H1 (cell line): ENCODE measurements at regions of chr10 and their contacts with region 1.

Region 1: GRCh38 chr10:124418726-124419501 is at the start of gene OAT:
- DNase-seq: peak; percentile 95 to 97
- H3K4me3 ChIP-seq: peak within 1 kb of the TSS; percentile 58 to 79 (median 62)
- H3K27ac ChIP-seq: no peak within 1 kb of the TSS; the same call in 1 of the 2 replicates
- H3K4me1 ChIP-seq: peaks cover 2 to 5% (median 4%) of the 10 kb centered on the region in 4 experiments; a peak in 5 of 7 replicates
- H3K27me3 ChIP-seq: peaks cover 0 to 2% (median 0%) of the 10 kb centered on the region in 4 experiments; a peak in 1 of 7 replicates
- CTCF ChIP-seq: peak; percentile 33 to 47 (median 46); a peak in 3 of 4 replicates
- EP300 ChIP-seq: no peak
- POLR2A ChIP-seq: peak; percentile 95
- RAD21 ChIP-seq: peak; percentile 37 to 43; a peak in 3 of 4 replicates
- total RNA-seq, gene OAT: 121 TPM in 2 replicates

Region 2: DNA sequence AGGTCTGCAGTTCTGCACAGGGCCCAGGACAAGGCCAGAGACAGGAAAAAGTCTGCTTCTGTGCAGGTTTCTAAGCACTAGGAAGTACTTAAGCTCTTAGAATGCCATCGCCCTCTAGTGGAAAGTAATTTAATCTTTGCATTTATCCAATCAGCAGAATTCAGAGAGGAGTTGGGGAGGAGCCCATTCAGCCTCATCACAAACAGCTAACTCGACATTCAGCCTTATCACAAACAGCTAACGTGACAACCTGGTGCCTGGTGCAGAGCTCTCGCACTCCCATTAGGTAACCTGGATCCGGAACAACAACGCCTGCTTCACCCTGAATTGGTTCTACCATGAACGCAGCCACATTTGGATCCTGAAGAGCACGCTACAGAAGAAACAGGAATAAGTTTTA is 15.4 kb before region 1 on chr10:
- CTCF ChIA-PET with region 1: interaction called, 20 read pairs
- POLR2A ChIA-PET with region 1: interaction called, 22 read pairs
- DNase-seq: peak; percentile 51 to 57
- H3K4me3 ChIP-seq: no peak overlapping the region
- H3K27ac ChIP-seq: no peak overlapping the region
- H3K4me1 ChIP-seq: no peaks in the 10 kb centered on the region
- H3K27me3 ChIP-seq: no peaks in the 10 kb centered on the region
- CTCF ChIP-seq: peak in 2 of 3 experiments; percentile 73 to 83; a peak in 3 of 4 replicates
- EP300 ChIP-seq: no peak
- POLR2A ChIP-seq: no peak
- RAD21 ChIP-seq: peak; percentile 61 to 79

Region 3: DNA sequence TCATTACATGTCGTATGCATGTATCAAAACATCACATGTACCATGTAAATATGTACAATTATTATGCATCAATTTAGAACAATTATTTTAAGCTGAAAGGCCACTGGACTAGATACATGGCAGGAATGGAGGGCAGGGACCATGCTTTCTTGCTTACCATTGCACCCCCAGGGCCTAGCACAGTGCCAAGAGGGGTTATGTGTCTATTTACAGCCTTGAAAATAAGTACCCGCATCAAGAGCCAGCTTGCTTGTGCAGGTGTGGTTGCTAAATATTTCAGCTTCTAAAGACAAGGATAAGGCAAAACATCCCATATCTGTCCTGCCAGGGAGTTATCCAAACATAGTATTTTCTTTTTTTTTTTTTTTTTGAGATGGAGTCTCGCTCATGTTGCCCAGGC is 14.5 kb after region 1 on chr10:
- CTCF ChIA-PET with region 1: interaction called, 6 read pairs
- POLR2A ChIA-PET with region 1: interaction called, 19 read pairs
- DNase-seq: no peak
- H3K4me3 ChIP-seq: no peak overlapping the region
- H3K27ac ChIP-seq: no peak overlapping the region
- H3K4me1 ChIP-seq: no peaks in the 10 kb centered on the region; a peak in 1 of 7 replicates
- H3K27me3 ChIP-seq: no peaks in the 10 kb centered on the region
- CTCF ChIP-seq: no peak
- EP300 ChIP-seq: no peak
- POLR2A ChIP-seq: no peak
- RAD21 ChIP-seq: no peak

Region 4: GRCh38 chr10:124450012-124450781 is 31.3 kb after region 1 on chr10 and contains the start of gene NKX1-2:
- CTCF ChIA-PET with region 1: interaction called, 3 read pairs
- POLR2A ChIA-PET with region 1: interaction called, 43 read pairs
- DNase-seq: peak in 1 of 2 experiments; percentile 89
- H3K4me3 ChIP-seq: peak within 1 kb of the TSS; percentile 45 to 72 (median 66)
- H3K27ac ChIP-seq: no peak within 1 kb of the TSS
- H3K4me1 ChIP-seq: peaks cover 17 to 39% (median 27%) of the 10 kb centered on the region in 4 experiments
- H3K27me3 ChIP-seq: peaks cover 1 to 50% (median 38%) of the 10 kb centered on the region in 4 experiments
- CTCF ChIP-seq: no peak
- EP300 ChIP-seq: no peak
- POLR2A ChIP-seq: no peak
- RAD21 ChIP-seq: no peak
- total RNA-seq, gene NKX1-2: 33.9 and 34.9 TPM in 2 replicates

Region 5: GRCh38 chr10:124461438-124462347 is 42.8 kb after region 1 on chr10 and contains the start of gene LHPP:
- CTCF ChIA-PET with region 1: interaction called, 3 read pairs
- POLR2A ChIA-PET with region 1: interaction called, 20 read pairs
- DNase-seq: peak in 1 of 2 experiments; percentile 92
- H3K4me3 ChIP-seq: peak within 1 kb of the TSS; percentile 69 to 91 (median 72)
- H3K27ac ChIP-seq: no peak within 1 kb of the TSS; the same call in 1 of the 2 replicates
- H3K4me1 ChIP-seq: peaks cover 11 to 36% (median 23%) of the 10 kb centered on the region in 4 experiments
- H3K27me3 ChIP-seq: no peaks in the 10 kb centered on the region
- CTCF ChIP-seq: peak in 2 of 3 experiments; percentile 5 to 15; a peak in 2 of 4 replicates
- EP300 ChIP-seq: no peak
- POLR2A ChIP-seq: peak in 1 of 2 experiments; percentile 48; a peak in 1 of 3 replicates
- RAD21 ChIP-seq: no peak; a peak in 1 of 4 replicates
- total RNA-seq, gene LHPP: 26.0 and 27.5 TPM in 2 replicates